Ascending aorta (tissue), 2 donors: ENCODE measurements at regions of chr20 and their contacts with region 1.

Region 1: DNA sequence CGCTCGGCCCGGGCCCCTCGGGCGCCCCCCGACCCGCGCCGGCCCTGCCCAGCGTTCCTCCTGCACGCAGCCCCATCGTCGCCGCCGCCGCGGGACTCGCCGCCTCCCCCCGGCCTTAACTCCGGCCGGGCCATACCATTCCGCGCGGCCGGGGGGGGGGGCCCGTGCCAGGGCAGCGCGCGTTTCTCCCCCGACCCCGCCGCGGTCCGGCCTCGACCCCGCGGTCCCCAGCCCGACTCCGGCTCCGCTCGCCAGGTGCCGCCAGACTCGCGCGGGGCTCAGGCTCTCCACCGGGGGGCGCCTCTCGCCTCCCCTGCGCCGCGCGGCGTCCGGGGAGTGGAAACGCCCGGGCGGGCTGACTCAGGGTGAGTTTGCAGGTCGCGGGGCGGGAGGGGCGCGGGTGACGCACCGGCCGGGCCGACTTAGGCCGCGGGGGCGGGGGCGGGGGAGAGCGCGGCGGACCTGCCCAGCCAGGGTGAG is at the start of gene SRXN1:
- DNase-seq: peak; percentile 67 to 95
- H3K4me3 ChIP-seq: peak within 1 kb of the TSS; percentile 61 to 84
- H3K27ac ChIP-seq: peak within 1 kb of the TSS; percentile 82 to 84
- H3K4me1 ChIP-seq: peaks cover 9% of the 10 kb centered on the region in 2 donors
- H3K27me3 ChIP-seq: no peaks in the 10 kb centered on the region
- CTCF ChIP-seq: peak in 2 of 3 experiments; percentile 37 to 53
- total RNA-seq, gene SRXN1: 28.8 TPM

Region 2: DNA sequence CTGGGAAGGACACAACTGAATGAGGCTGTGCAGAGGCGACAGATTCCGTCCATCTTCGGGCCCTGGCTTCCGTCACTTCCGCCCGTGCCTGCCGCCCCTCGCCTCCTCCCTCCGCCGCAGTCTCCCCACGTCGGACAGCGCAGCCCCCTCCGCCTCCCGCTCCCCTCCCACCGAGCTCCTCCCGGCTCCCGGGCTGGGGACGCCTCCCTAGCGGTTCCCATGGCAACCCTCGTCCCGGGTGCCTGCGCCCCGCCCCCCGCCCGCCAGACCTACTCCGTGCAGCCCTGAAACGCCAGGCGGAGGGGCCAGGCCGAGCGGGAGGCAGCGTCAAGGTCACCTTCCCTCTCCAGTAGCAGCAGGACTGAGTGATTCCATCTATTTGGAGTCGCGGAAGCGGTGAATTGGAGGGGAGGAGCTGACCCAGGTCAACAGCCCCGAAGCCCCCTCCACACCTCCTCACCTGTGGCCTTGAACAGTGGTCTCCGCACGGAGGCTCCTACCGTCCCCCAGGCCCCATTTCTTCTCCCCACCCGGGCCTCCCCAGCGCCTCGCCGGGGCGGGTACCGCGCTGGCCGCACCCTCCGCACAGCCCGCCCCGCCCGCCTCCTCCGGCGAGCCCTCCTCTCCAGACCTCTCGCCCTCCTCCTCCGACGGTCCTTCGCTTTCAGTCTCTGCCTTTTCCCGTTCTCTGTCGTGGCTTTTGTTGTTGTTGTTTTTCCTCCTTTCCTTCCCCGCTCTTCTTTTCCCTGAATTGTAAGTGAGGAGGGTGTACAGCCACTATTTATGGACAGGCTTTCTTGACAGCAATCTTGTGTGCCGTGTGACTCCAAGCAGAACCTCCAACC is 305.3 kb before region 1 on chr20:
- intact Hi-C with region 1: loop called (anchors 5 kb)
- DNase-seq: peak; percentile 55 to 93
- H3K4me3 ChIP-seq: peak overlapping the region; percentile 67 to 83
- H3K27ac ChIP-seq: peak overlapping the region; percentile 84 to 90
- H3K4me1 ChIP-seq: peaks cover 0 to 6% of the 10 kb centered on the region in 2 donors
- H3K27me3 ChIP-seq: no peaks in the 10 kb centered on the region
- CTCF ChIP-seq: no peak

Region 3: GRCh38 chr20:642398-643174 is 10.6 kb before region 1 on chr20:
- intact Hi-C with region 1: no loop called
- DNase-seq: no peak
- H3K4me3 ChIP-seq: peak overlapping the region; percentile 24 to 60
- H3K27ac ChIP-seq: no peak overlapping the region
- H3K4me1 ChIP-seq: peaks cover 2 to 3% of the 10 kb centered on the region in 2 donors
- H3K27me3 ChIP-seq: no peaks in the 10 kb centered on the region
- CTCF ChIP-seq: no peak

Region 4: DNA sequence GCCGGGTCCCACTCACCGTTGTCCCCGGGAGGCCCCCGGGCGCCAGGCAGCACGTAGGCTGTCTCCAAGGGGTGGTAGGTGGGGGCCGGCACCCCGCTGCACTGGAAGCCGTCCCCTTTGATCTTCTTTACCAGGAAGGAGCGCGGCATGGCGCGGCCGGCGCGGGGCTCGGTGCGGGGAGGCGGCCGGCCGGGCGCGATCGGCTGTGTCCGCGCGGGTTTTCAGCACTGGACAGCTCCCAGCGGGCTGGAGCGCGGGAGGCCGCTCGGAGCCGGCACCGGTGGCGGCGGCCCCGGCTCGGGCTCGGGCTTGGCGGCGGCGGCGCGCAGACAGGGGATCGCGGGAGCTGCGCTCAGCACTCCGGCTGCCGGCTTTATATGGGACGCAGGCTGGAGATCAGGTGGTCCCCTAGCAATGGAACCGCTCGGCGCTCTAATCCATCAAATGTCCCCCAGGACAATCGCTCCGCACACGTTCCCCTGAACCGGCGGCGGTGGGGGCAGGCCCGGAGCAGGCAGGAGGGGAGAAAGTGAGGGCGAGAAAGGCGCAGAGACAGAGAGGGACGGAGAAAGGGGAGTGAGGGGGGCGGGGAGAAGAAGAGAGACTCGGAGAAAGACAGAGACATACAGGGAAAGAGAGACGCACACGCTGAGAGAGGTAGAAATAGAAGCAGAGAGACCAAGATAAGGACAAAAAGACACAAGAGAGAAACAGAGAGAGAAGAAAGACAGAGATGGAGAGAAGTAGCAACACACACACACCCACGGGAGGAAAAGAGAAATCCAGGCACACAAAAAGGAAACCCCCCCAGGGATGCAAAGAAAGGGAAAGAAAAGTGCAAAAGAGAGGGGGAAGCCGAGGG is 22.5 kb after region 1 on chr20 and contains the start of gene SCRT2:
- intact Hi-C with region 1: loop called (anchors 2 kb)
- DNase-seq: peak in 1 of 2 donors; percentile 83
- H3K4me3 ChIP-seq: peak within 1 kb of the TSS; percentile 19 to 21
- H3K27ac ChIP-seq: no peak within 1 kb of the TSS
- H3K4me1 ChIP-seq: peaks cover 0 to 5% of the 10 kb centered on the region in 2 donors
- H3K27me3 ChIP-seq: peaks cover 6% of the 10 kb centered on the region
- CTCF ChIP-seq: no peak
- total RNA-seq, gene SCRT2: not detected

Region 5: DNA sequence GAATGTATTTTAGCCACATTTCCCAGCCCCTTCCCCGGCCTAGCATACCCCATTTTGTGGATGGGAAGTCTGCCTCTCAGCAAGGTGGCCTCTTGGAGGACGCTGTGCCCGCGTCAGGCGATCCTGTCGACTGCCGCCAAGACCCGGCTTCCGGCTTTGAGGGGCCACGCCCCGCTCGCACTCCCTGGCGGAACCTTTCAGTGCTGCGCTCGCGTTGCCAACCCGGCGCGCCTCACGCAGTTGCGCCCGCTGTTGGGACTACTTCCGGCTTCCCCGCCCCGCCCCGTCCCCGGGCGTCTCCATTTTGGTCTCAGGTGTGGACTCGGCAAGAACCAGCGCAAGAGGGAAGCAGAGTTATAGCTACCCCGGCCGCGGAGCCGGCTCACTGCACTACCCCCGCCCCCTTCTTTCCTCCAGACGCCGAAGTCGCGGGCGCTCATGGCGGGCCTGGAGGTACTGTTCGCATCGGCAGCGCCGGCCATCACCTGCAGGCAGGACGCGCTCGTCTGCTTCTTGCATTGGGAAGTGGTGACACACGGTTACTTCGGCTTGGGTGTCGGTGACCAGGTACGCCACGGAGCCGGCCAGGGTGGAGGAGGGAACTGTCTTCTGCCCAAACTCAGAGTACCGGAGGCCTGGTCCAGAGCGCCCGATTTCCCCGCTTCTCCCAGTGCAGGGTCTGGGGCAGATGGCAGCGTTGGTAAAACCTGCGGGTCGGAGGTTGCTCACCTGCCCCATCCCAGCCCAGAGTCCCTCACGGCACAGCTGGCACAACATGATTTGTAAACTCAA is 465.4 kb after region 1 on chr20 and contains the start of gene PSMF1:
- intact Hi-C with region 1: loop called (anchors 5 kb)
- DNase-seq: peak; percentile 77 to 96
- H3K4me3 ChIP-seq: peak within 1 kb of the TSS; percentile 99
- H3K27ac ChIP-seq: peak within 1 kb of the TSS; percentile 74 to 80
- H3K4me1 ChIP-seq: peaks cover 8 to 44% of the 10 kb centered on the region in 2 donors
- H3K27me3 ChIP-seq: no peaks in the 10 kb centered on the region
- CTCF ChIP-seq: peak; percentile 3 to 28 (median 10)
- total RNA-seq, gene PSMF1: 46.8 TPM

Region 6: GRCh38 chr20:1816384-1817381 is 1163.5 kb after region 1 on chr20:
- intact Hi-C with region 1: loop called (anchors 10 kb)
- DNase-seq: no peak
- H3K4me3 ChIP-seq: peak overlapping the region in 1 of 2 donors; percentile 37
- H3K27ac ChIP-seq: peak overlapping the region; percentile 80 to 92
- H3K4me1 ChIP-seq: peaks cover 34 to 65% of the 10 kb centered on the region in 2 donors
- H3K27me3 ChIP-seq: no peaks in the 10 kb centered on the region
- CTCF ChIP-seq: no peak